ENCODE measurements at regions of chr3 and their contacts with region 1.

Region 1: DNA sequence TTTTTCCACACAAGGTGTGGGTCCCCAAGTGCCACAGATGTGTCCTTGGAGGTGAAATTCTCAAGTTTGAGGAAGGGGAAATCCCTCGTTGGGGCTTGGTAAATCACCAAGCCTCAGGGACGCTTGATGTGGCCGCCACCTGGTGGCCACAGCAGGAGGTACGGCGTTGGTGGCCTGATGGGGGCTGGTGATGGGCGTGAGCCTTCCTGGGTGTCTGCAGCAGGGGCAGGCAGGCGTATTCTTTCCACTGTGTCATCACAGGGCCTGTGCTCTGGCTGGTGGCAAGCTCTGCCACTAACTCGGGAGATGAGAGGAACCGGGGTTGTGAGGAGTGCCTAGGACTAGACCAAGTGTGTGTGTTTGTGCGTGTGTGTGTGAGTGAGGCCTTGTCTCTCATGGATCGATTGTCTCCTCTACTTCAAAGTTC is 4.2 kb downstream of the ACOX2 start:
- DNase-seq: peak; percentile 83 to 89 (median 85)
- ATAC-seq: peak; percentile 60 to 72 (median 66)
- H3K4me3 ChIP-seq: no peak overlapping the region
- H3K27ac ChIP-seq: peak overlapping the region in 2 of 3 donors; percentile 46 to 90
- H3K4me1 ChIP-seq: peaks cover 0 to 87% (median 46%) of the 10 kb centered on the region in 4 donors
- H3K27me3 ChIP-seq: no peaks in the 10 kb centered on the region
- CTCF ChIP-seq: peak; percentile 94 to 97 (median 96)
- POLR2A ChIP-seq: no peak

Region 2: DNA sequence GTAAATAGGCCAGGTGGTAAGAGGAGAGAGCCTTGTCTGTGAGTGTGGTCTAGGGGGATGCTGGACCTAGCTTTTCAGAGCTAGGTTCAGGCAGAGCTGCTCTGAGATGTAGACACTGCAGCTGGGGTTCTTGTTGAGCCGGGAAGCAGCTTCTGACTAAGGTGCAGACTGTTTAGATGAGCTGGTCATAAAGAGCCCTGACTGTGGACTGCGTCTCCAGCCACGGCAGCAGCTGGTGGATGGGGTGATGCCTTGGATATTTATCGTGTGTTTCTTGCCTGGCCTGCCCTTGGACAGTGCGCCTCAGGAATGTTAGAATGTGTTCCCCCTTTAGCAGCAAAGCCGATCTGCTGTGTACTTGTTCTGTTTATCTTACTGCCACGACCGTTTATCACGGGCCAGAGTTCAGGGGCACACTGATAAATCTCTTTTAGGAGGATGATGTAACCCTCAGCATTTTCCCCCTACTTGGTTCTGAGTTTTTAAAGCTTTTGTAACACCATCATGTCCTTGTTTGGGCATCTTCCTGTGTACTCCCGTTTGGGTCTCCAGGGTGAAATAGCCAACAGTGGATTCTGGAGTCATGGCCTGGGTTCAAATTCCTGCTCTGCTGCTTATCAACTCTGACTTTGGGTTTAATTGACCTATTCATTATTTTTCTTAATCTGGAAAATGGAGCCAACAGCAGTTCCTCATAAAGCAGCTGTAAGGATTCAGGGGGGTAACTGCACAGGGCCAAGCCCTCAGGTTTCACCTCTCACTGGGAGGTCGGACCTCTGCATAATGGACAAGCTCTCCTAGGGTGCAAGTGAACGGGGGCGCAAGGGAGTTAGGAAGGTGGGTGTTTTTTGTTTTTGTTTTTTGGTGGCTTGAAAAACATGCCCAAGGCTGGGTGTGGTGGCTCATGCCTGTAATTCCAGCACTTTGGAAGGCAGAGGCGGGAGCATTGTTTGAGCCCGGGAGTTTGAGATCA is 473.2 kb before region 1 on chr3:
- intact Hi-C with region 1: no loop called
- DNase-seq: peak; percentile 60 to 88 (median 82)
- ATAC-seq: peak; percentile 78 to 90 (median 85)
- H3K4me3 ChIP-seq: no peak overlapping the region
- H3K27ac ChIP-seq: peak overlapping the region; percentile 78 to 89 (median 88)
- H3K4me1 ChIP-seq: peaks cover 0 to 59% (median 26%) of the 10 kb centered on the region in 4 donors
- H3K27me3 ChIP-seq: no peaks in the 10 kb centered on the region
- CTCF ChIP-seq: no peak
- POLR2A ChIP-seq: peak; percentile 65

Region 3: GRCh38 chr3:58317811-58318210 is 215.0 kb before region 1 on chr3:
- intact Hi-C with region 1: loop called (anchors 10 kb)
- DNase-seq: no peak
- ATAC-seq: peak in 1 of 4 donors; percentile 36
- H3K4me3 ChIP-seq: no peak overlapping the region
- H3K27ac ChIP-seq: no peak overlapping the region
- H3K4me1 ChIP-seq: peaks cover 0 to 6% (median 2%) of the 10 kb centered on the region in 4 donors
- H3K27me3 ChIP-seq: no peaks in the 10 kb centered on the region
- CTCF ChIP-seq: no peak
- POLR2A ChIP-seq: no peak

Region 4: GRCh38 chr3:58433400-58434169 is 99.2 kb before region 1 on chr3 and contains the start of gene PDHB:
- intact Hi-C with region 1: no loop called
- DNase-seq: peak; percentile 93 to 95 (median 94)
- ATAC-seq: peak; percentile 95 to 98 (median 96)
- H3K4me3 ChIP-seq: peak within 1 kb of the TSS; percentile 75 to 91 (median 78)
- H3K27ac ChIP-seq: peak within 1 kb of the TSS; percentile 73 to 90 (median 86)
- H3K4me1 ChIP-seq: peaks cover 0 to 13% (median 8%) of the 10 kb centered on the region in 4 donors
- H3K27me3 ChIP-seq: no peaks in the 10 kb centered on the region
- CTCF ChIP-seq: no peak
- POLR2A ChIP-seq: peak; percentile 83
- total RNA-seq, gene PDHB: 35.5 to 70.2 (median 47.3) TPM

Region 5: GRCh38 chr3:58804914-58805313 is 272.1 kb after region 1 on chr3:
- intact Hi-C with region 1: no loop called
- DNase-seq: no peak
- ATAC-seq: no peak
- H3K4me3 ChIP-seq: no peak overlapping the region
- H3K27ac ChIP-seq: no peak overlapping the region
- H3K4me1 ChIP-seq: no peaks in the 10 kb centered on the region
- H3K27me3 ChIP-seq: no peaks in the 10 kb centered on the region
- CTCF ChIP-seq: no peak
- POLR2A ChIP-seq: no peak